ENCODE measurements at regions of chr12 and their contacts with region 1.

Region 1: GRCh38 chr12:48851883-48852733 is at the start of gene DDX23:
- DNase-seq: peak; percentile 97
- CTCF ChIP-seq: no peak

Region 2: GRCh38 chr12:48814262-48815125 is 37.6 kb before region 1 on chr12:
- CTCF ChIA-PET with region 1: interaction called, 47 read pairs
- POLR2A ChIA-PET with region 1: interaction called, 7 read pairs
- DNase-seq: peak; percentile 96
- CTCF ChIP-seq: peak; percentile 100

Region 3: GRCh38 chr12:48838048-48838447 is 14.1 kb before region 1 on chr12:
- CTCF ChIA-PET with region 1: interaction called, 17 read pairs
- POLR2A ChIA-PET with region 1: no interaction called
- DNase-seq: no peak
- CTCF ChIP-seq: no peak

Region 4: GRCh38 chr12:48882315-48882687 is 30.2 kb after region 1 on chr12:
- CTCF ChIA-PET with region 1: interaction called, 313 read pairs
- POLR2A ChIA-PET with region 1: no interaction called
- DNase-seq: no peak
- CTCF ChIP-seq: no peak

Region 5: GRCh38 chr12:48924617-48925303 is 72.7 kb after region 1 on chr12:
- CTCF ChIA-PET with region 1: interaction called, 12 read pairs
- POLR2A ChIA-PET with region 1: no interaction called
- DNase-seq: peak; percentile 86
- CTCF ChIP-seq: peak; percentile 77

Region 6: DNA sequence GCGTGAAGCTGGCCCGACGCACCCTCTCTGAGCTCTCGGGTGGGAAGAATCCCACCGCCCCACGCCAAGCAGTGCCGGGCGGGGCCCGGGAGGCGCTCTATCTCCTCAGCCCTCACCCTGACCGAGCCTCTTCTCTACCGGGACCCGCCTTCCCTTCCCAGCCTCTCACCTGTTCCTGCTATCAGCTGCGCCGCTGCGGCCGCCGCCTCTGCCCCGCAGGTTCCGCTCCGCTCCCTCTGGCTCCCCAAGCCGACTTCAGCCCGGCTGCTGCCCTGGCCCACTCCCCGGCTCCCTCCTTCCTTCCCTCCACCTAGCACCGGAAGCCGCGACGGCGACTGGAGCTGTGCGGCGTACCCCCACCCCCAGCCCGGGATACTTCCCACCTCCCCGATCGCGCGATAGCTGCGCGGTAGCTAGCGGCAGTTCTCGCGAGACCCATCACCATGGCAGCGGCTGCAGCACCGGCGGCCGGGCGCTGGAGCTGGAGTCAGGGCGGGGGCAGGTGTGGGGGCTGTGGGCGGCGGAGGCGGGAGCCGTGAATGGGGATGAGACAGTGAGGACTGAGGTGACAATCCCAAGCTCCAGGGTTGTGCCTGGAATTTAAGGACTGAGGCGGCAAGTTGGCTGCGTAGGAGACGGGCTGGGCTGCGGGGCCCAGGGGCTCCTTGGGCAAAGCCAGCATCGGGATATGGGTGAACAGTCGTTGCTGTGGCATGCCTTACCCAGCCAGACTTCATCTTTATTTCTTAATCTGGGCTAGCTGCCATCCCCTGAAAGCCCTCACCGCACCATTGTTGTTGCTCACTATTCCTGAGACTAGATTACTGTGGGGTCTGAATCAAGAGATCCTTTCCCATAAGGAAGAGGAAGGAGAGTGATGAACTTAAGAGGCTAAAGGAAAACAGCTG is 105.3 kb after region 1 on chr12 and contains the start of gene ARF3:
- CTCF ChIA-PET with region 1: interaction called, 16 read pairs
- POLR2A ChIA-PET with region 1: no interaction called
- DNase-seq: peak; percentile 97
- CTCF ChIP-seq: no peak

Region 7: DNA sequence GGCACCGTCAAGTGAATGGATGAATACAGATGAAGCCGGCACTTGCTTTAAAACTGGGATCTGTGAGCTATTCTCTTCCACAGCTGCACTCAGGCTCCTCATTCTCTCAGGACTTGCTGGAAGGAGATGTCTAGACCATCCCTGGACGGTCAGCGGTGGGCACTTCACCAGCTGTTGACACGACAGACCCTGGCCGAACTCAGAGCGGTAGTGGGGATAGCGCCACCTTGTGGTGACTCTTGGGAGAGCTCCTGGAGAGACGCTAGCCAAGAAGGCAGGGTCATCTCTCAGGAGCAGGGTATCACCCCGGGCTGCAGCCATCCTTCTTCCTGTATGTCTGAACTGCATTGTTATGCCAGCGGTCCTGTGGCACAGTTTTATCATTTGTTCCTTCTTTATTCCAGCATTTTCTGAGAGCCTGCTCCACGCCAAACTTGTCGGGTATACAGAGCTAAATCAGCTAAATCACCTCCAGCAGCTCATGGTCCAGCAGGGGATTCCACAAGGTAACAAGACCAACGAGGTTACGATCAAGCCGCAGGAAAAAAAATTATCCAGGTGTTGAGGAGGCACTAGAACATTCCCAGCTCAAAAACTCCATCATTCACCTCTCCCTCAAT is 136.0 kb after region 1 on chr12:
- CTCF ChIA-PET with region 1: interaction called, 33 read pairs
- POLR2A ChIA-PET with region 1: no interaction called
- DNase-seq: peak; percentile 80
- CTCF ChIP-seq: peak; percentile 85

Region 8: GRCh38 chr12:49069507-49070346 is 217.6 kb after region 1 on chr12 and contains the start of gene RHEBL1:
- CTCF ChIA-PET with region 1: no interaction called
- POLR2A ChIA-PET with region 1: no interaction called
- DNase-seq: peak; percentile 99
- CTCF ChIP-seq: peak; percentile 21

Measured in GM10248 (cell line).